ENCODE measurements at regions of chr4 and their contacts with region 1.

Region 1: GRCh38 chr4:145936142-145936996 is 2.3 kb downstream of the ZNF827 start:
- DNase-seq: peak; percentile 58
- H3K4me3 ChIP-seq: peak overlapping the region; percentile 72 to 79
- H3K27ac ChIP-seq: peak overlapping the region; percentile 96 to 97
- H3K4me1 ChIP-seq: peaks cover 6% of the 10 kb centered on the region
- H3K27me3 ChIP-seq: no peaks in the 10 kb centered on the region
- CTCF ChIP-seq: peak in 1 of 4 experiments; percentile 16
- POLR2A ChIP-seq: peak; percentile 25

Region 2: DNA sequence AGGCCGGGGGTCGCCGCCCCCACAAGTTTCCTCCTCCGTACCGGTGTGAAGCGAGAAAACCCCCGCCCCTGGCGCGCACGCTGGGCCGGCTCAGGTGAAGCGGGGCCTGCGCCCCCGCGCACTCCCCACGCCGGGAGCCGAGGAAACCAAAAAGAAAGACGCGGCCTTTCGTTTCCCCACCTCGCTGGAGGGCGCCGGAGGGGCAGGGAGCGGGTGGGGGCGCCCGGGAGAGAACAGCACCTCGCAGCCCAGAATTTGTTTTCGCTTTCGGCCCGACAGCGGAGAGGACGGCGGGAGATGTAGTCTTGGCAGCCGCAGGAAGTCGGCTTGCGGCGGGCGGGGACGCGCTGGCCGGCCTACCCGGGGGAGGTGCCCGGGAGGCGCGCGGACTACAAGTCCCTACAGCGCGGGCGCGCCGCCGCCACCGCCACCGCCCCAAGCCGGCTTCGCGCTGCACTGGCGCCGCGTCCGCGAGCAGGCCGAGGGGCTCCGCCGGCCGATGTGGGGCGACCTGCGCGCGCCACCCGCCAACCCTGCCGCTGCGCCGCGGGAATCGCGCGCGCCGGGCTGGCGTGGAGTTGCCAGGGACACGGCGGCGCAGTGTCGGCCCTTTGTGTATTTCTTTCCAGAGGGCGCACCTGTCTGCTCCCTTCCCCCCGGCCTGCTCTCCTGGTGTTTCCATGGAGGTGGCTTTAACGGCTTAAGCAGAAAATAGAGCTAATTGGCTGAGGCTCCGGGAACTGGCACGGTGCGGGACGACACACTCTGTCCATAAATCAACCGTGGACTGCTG is 755.9 kb before region 1 on chr4 and contains the start of gene OTUD4:
- intact Hi-C with region 1: loop called (anchors 10 kb)
- DNase-seq: peak; percentile 96
- H3K4me3 ChIP-seq: peak within 1 kb of the TSS; percentile 60 to 87
- H3K27ac ChIP-seq: peak within 1 kb of the TSS; percentile 95 to 96
- H3K4me1 ChIP-seq: no peaks in the 10 kb centered on the region
- H3K27me3 ChIP-seq: no peaks in the 10 kb centered on the region
- CTCF ChIP-seq: peak in 1 of 4 experiments; percentile 26
- POLR2A ChIP-seq: peak; percentile 69
- total RNA-seq, gene OTUD4: 22.2 to 43.2 TPM

Region 3: GRCh38 chr4:145732895-145733880 is 203.2 kb before region 1 on chr4:
- intact Hi-C with region 1: loop called (anchors 2 kb)
- DNase-seq: peak; percentile 95
- H3K4me3 ChIP-seq: peak overlapping the region; percentile 45 to 60
- H3K27ac ChIP-seq: peak overlapping the region; percentile 97 to 98
- H3K4me1 ChIP-seq: peaks cover 30% of the 10 kb centered on the region
- H3K27me3 ChIP-seq: no peaks in the 10 kb centered on the region
- CTCF ChIP-seq: peak in 2 of 4 experiments; percentile 31 to 37
- POLR2A ChIP-seq: peak; percentile 75

Region 4: DNA sequence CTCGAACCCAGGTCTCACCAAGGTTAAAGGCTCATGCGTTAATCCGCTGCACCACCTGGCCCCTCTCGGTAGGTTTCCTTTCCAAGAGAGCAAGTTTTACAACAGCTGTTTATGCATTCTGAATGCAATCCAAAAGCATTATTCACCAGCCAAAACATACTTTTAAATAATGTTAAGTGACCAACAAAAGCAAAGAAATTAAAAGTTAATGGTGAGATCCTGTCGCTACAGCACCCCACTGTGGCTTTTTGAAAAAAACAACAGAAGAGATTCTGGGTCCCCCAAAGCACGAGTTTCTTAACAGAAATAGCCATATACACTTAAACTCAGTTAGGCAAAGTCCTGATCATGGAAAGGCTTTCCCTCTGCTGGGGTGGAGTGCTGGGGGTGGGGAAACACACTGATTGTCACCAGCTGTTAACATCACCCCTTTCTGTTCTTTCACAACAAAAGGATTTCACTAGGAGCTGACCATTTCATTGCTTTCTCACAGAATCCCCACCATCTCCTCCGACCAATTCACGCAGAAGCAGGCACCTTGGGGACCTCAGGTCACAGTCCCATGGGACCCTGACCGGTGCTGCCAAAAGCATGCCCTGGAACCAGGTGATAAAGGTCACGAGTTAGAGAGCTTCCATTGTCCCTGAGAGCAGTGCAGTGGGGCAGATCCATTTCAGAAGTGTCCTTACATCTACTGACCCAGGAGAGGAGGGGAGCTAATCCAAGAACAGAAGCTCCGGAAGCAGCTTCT is 49.0 kb before region 1 on chr4:
- intact Hi-C with region 1: loop called (anchors 5 kb)
- DNase-seq: peak; percentile 17
- H3K4me3 ChIP-seq: no peak overlapping the region
- H3K27ac ChIP-seq: peak overlapping the region; percentile 52 to 55
- H3K4me1 ChIP-seq: peaks cover 6% of the 10 kb centered on the region
- H3K27me3 ChIP-seq: no peaks in the 10 kb centered on the region
- CTCF ChIP-seq: peak in 2 of 4 experiments; percentile 21 to 27
- POLR2A ChIP-seq: no peak

Region 5: DNA sequence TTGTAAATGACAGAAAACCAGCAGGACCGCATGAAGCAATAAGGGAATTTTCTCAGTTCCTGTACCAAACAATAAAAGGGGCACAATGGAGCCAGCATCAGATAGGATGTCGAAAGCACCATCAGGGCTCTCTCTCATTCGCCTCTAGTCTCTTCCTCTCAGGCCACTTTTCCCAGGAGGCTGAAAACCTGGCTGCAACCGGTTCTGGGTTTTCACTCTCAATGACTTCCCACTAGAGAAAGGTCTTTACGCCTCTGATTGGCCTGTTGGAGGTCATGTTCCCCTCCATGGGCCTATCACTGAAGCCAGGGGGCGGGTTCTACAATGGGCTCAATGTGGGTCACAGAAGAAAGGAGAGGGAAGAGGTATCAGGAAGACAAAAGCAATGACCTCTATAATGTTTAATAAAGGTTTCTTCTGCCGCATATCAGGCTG is 27.1 kb before region 1 on chr4:
- intact Hi-C with region 1: loop called (anchors 1 kb)
- DNase-seq: peak; percentile 62
- H3K4me3 ChIP-seq: peak overlapping the region; percentile 6 to 19
- H3K27ac ChIP-seq: peak overlapping the region; percentile 61 to 62
- H3K4me1 ChIP-seq: peaks cover 7% of the 10 kb centered on the region
- H3K27me3 ChIP-seq: no peaks in the 10 kb centered on the region
- CTCF ChIP-seq: peak in 1 of 4 experiments; percentile 16
- POLR2A ChIP-seq: peak; percentile 32

Measured in prostate gland (tissue), 2 donors.